Dendritic cell treated with granulocyte-macrophage colony-stimulating factor and Interleukin-4, amounts not matched to agents 40 ng/mL and 50 ng/mL, for 4 days (primary cell): ENCODE measurements at regions of chr1 and their contacts with region 1.

Region 1: DNA sequence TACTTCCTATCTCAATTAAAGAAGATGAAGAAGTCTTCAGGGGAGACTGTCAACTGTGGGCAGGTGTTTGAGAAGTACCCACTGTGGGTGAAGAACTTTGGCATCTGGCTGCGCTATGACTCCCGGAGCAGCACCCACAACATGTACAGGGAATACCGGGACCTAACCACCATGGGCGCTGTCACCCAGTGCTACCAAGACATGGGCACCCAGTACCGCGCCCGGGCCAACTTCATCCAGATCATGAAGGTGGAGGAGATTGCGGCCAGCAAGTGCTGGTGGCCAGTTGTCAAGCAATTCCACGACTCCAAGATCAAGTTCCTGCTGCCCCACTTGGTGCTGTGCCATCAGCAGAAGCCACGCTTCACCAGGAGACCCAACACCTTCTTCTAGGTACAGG is 15.5 kb upstream of the RNF19B start:
- H3K4me3 Mint-ChIP-seq: peak overlapping the region; percentile 34
- H3K27ac Mint-ChIP-seq: peak overlapping the region; percentile 99
- H3K4me1 Mint-ChIP-seq: peaks cover 87% of the 10 kb centered on the region
- H3K27me3 Mint-ChIP-seq: peaks cover under 1% of the 10 kb centered on the region

Region 2: GRCh38 chr1:32992489-32993323 is 12.6 kb after region 1 on chr1:
- intact Hi-C with region 1: loop called (anchors 1 kb)
- H3K4me3 Mint-ChIP-seq: peak overlapping the region; percentile 55
- H3K27ac Mint-ChIP-seq: peak overlapping the region; percentile 99
- H3K4me1 Mint-ChIP-seq: peaks cover 95% of the 10 kb centered on the region
- H3K27me3 Mint-ChIP-seq: no peaks in the 10 kb centered on the region